Calu3 (cell line): ENCODE measurements at regions of chr2 and their contacts with region 1.

Region 1: GRCh38 chr2:119826370-119826961 is 66.7 kb downstream of the PTPN4 start:
- DNase-seq: peak; percentile 52
- H3K4me3 Mint-ChIP-seq: no peak overlapping the region
- H3K27ac Mint-ChIP-seq: no peak overlapping the region
- H3K4me1 Mint-ChIP-seq: peaks cover 18% of the 10 kb centered on the region
- H3K27me3 Mint-ChIP-seq: no peaks in the 10 kb centered on the region
- CTCF ChIP-seq: peak; percentile 56

Region 2: GRCh38 chr2:119641562-119642258 is 184.8 kb before region 1 on chr2:
- CTCF ChIA-PET with region 1: no interaction called
- intact Hi-C with region 1: loop called (anchors 5 kb)
- DNase-seq: peak; percentile 79
- H3K4me3 Mint-ChIP-seq: no peak overlapping the region
- H3K27ac Mint-ChIP-seq: no peak overlapping the region
- H3K4me1 Mint-ChIP-seq: peaks cover 30% of the 10 kb centered on the region
- H3K27me3 Mint-ChIP-seq: no peaks in the 10 kb centered on the region
- CTCF ChIP-seq: peak; percentile 86

Region 3: DNA sequence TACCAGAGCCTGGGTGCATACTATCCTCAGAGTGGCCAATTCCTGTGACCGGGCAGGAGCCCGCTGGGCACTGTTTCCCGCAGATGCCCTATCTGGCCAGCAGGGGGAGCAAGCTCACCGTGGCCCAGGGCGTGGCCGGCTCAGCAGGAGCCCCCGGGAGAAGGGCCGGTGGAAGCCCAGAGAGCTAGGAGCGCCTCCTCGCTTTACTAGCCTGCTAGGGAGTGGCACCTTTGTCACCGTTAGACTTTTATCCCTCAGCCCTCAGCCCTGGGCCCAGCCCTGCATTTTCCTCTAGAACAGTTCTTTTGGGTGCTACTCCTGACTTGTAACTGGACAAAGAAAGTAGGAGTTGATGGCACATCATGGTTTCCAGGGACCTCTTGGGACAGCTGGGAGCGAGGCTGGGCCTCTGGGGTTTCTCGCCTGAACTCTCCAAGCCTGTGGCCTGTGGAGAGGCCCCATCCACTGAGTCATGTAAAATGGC is 123.5 kb before region 1 on chr2:
- CTCF ChIA-PET with region 1: interaction called, 15 read pairs
- intact Hi-C with region 1: loop called (anchors 2 kb)
- DNase-seq: peak; percentile 83
- H3K4me3 Mint-ChIP-seq: no peak overlapping the region
- H3K27ac Mint-ChIP-seq: no peak overlapping the region
- H3K4me1 Mint-ChIP-seq: no peaks in the 10 kb centered on the region
- H3K27me3 Mint-ChIP-seq: no peaks in the 10 kb centered on the region
- CTCF ChIP-seq: peak; percentile 96

Region 4: DNA sequence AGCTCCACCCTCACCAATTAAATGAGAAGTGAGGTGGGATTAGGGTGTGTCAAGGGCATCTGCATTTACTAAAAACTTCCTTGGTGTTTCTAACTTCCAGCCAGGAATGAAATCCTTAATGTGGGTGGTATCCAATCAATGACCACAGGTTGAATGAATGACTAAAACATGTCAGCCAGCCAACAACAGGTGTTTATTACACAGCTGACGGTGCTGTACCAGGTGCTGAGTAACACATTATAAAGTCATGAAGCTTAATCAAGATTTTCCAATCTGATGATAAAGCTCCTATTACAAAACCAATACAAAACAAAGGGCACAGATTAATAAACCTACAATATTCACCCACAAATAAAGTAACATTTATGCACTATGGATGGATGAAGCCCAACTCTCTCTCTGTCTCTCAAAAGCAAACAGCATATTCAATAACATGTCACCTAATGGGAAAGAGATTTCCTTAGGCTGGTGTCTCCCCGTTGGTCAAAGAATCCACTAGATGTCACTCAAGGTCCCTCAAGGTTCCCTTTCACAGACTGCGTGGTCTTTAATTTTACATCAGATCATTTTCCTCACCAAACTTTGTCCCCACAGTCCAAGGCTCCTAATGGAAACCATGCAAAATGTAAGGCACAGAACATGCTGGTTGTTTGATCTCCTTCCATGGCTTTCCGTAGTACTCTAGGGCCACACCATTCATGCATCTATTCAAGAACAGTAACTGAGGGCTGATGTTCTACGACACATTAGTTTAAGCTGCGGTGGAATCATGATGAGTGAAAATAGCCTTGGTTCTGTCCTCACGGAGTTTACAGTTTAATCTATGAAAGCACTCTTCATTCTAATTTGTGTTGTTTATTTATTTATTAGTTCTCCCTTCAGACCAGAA is 73.2 kb before region 1 on chr2:
- CTCF ChIA-PET with region 1: interaction called, 16 read pairs
- intact Hi-C with region 1: loop called (anchors 1 kb)
- DNase-seq: peak; percentile 54
- H3K4me3 Mint-ChIP-seq: no peak overlapping the region
- H3K27ac Mint-ChIP-seq: no peak overlapping the region
- H3K4me1 Mint-ChIP-seq: peaks cover 19% of the 10 kb centered on the region
- H3K27me3 Mint-ChIP-seq: no peaks in the 10 kb centered on the region
- CTCF ChIP-seq: peak; percentile 54

Region 5: GRCh38 chr2:119795309-119796303 is 30.9 kb before region 1 on chr2:
- CTCF ChIA-PET with region 1: no interaction called
- intact Hi-C with region 1: no loop called
- DNase-seq: no peak
- H3K4me3 Mint-ChIP-seq: no peak overlapping the region
- H3K27ac Mint-ChIP-seq: no peak overlapping the region
- H3K4me1 Mint-ChIP-seq: peaks cover 33% of the 10 kb centered on the region
- H3K27me3 Mint-ChIP-seq: no peaks in the 10 kb centered on the region
- CTCF ChIP-seq: no peak